PC-3 (cell line): ENCODE measurements at regions of chr13 and their contacts with region 1.

Region 1: DNA sequence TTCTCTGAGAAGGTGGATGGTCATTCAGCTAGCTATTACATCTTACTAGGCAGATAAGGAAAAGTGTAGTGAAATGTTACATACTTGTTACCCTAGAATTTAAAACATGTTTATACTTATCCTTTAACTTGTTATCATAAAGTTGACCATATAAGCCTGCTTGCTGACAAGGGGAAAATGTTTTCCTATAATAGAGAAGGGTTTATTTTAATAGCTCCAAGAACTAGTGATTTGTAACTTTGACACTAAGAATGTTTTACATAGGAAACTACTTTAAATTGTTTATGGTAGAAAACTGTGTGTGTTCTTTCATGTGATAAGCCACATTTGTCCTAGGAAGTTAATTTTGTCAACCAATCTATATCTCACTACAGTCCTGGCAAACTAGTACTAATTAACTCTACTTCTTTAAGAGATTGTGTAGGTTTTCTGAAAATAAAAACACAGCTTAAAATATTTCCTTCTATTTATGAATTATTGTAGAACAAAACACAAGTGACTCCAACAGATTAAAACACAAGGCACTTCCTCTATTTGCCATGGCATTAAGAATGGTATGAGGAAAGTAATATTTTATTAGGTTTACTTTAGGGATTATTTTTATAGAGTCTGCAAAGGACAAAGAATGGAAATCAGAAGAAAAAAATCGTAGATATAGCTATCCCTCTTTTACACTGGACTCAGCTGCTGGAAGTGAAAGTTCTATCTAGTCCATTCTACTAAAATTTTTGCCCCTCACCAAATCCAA is 233.3 kb upstream of the NBEA start:
- DNase-seq: peak; percentile 13
- ATAC-seq: peak; percentile 64
- H3K4me3 ChIP-seq: no peak overlapping the region
- H3K27ac ChIP-seq: peak overlapping the region; percentile 31
- H3K4me1 ChIP-seq: peaks cover 13% of the 10 kb centered on the region
- H3K27me3 ChIP-seq: no peaks in the 10 kb centered on the region
- CTCF ChIP-seq: no peak

Region 2: DNA sequence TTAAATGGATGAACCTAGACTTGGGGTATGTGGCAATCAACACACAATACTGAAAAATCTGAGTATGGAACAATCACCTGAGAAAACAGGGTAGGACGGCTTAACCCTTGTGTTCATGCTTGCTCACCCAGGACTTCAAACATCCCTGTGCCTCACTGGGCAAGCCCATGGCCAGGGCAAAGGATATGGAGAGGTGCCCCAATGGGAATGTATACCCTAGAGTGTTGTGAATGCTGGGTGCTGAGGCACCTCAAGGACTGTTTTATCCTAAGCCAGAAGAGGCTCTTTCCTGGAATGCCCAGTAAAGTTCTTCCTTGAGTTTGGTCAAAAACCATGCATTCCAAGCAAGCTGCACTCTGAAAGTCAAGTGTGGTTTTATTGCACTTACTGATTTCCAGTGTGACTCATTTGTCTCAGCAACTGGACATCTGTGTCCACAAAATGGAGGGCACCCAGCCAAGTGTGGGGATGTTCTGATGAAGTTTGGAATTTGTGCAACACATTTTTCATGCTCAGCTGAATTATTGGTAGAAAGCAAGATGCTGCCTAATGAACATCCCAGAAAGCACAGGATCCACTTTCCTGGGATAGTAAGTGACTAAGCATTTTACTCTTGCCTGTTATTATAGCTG is 359.5 kb before region 1 on chr13:
- CTCF ChIA-PET with region 1: no interaction called
- POLR2A ChIA-PET with region 1: no interaction called
- intact Hi-C with region 1: loop called (anchors 10 kb)
- DNase-seq: peak; percentile 92
- ATAC-seq: peak; percentile 73
- H3K4me3 ChIP-seq: no peak overlapping the region
- H3K27ac ChIP-seq: peak overlapping the region; percentile 96
- H3K4me1 ChIP-seq: peaks cover 51% of the 10 kb centered on the region
- H3K27me3 ChIP-seq: no peaks in the 10 kb centered on the region
- CTCF ChIP-seq: no peak

Region 3: GRCh38 chr13:34522808-34523207 is 185.9 kb before region 1 on chr13:
- CTCF ChIA-PET with region 1: no interaction called
- POLR2A ChIA-PET with region 1: no interaction called
- intact Hi-C with region 1: loop called (anchors 10 kb)
- DNase-seq: peak; percentile 12
- ATAC-seq: peak; percentile 48; the same call in 1 of the 2 replicates
- H3K4me3 ChIP-seq: no peak overlapping the region
- H3K27ac ChIP-seq: no peak overlapping the region
- H3K4me1 ChIP-seq: peaks cover 10% of the 10 kb centered on the region; the same call in 1 of the 2 replicates
- H3K27me3 ChIP-seq: no peaks in the 10 kb centered on the region
- CTCF ChIP-seq: no peak

Region 4: GRCh38 chr13:34657716-34658115 is 51.0 kb before region 1 on chr13:
- CTCF ChIA-PET with region 1: no interaction called
- POLR2A ChIA-PET with region 1: no interaction called
- intact Hi-C with region 1: loop called (anchors 10 kb)
- DNase-seq: peak; percentile 87
- ATAC-seq: peak; percentile 99
- H3K4me3 ChIP-seq: no peak overlapping the region
- H3K27ac ChIP-seq: peak overlapping the region; percentile 58
- H3K4me1 ChIP-seq: peaks cover 13% of the 10 kb centered on the region
- H3K27me3 ChIP-seq: no peaks in the 10 kb centered on the region
- CTCF ChIP-seq: no peak

Region 5: GRCh38 chr13:34696296-34696695 is 12.4 kb before region 1 on chr13:
- CTCF ChIA-PET with region 1: no interaction called
- POLR2A ChIA-PET with region 1: no interaction called
- intact Hi-C with region 1: no loop called
- DNase-seq: no peak
- ATAC-seq: no peak
- H3K4me3 ChIP-seq: no peak overlapping the region
- H3K27ac ChIP-seq: no peak overlapping the region
- H3K4me1 ChIP-seq: peaks cover 26% of the 10 kb centered on the region
- H3K27me3 ChIP-seq: no peaks in the 10 kb centered on the region
- CTCF ChIP-seq: no peak